OCI-LY7 (cell line): ENCODE measurements at regions of chr11 and their contacts with region 1.

Region 1: GRCh38 chr11:49995565-49995964 is 13.2 kb upstream of the OR4C12 start:
- DNase-seq: peak; percentile 80
- H3K4me3 ChIP-seq: no peak overlapping the region
- H3K27ac ChIP-seq: no peak overlapping the region
- H3K4me1 ChIP-seq: no peaks in the 10 kb centered on the region
- CTCF ChIP-seq: peak; percentile 88

Region 2: GRCh38 chr11:48307760-48308386 is 1687.7 kb before region 1 on chr11:
- CTCF ChIA-PET with region 1: no interaction called
- POLR2A ChIA-PET with region 1: no interaction called
- intact Hi-C with region 1: loop called (anchors 1 kb)
- DNase-seq: peak; percentile 70
- H3K4me3 ChIP-seq: no peak overlapping the region
- H3K27ac ChIP-seq: no peak overlapping the region
- H3K4me1 ChIP-seq: no peaks in the 10 kb centered on the region
- CTCF ChIP-seq: peak; percentile 99

Region 3: GRCh38 chr11:49221112-49221511 is 774.5 kb before region 1 on chr11:
- CTCF ChIA-PET with region 1: no interaction called
- POLR2A ChIA-PET with region 1: no interaction called
- intact Hi-C with region 1: loop called (anchors 10 kb)
- DNase-seq: no peak
- H3K4me3 ChIP-seq: no peak overlapping the region
- H3K27ac ChIP-seq: no peak overlapping the region
- H3K4me1 ChIP-seq: no peaks in the 10 kb centered on the region
- CTCF ChIP-seq: no peak

Region 4: DNA sequence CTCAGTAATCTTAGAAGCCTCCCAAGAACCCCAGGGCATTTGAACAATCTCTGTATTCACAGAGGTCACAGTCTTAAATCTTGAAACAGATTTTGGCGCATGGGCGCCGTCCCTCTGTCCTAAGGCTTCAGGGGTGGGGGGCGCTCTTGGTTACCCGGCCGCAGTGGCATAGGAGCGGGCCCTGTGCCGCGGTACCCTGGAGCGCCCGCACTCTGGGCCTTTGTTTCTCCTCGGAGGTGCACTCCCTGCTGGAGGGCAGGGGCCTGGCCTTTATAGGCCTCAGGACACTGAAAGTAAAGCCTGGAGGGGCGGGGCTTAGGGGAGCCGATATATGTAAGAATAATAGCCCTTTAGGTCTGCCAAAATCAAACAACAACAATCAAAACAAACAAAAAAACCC is 589.8 kb before region 1 on chr11:
- CTCF ChIA-PET with region 1: no interaction called
- POLR2A ChIA-PET with region 1: no interaction called
- intact Hi-C with region 1: no loop called
- DNase-seq: no peak
- H3K4me3 ChIP-seq: no peak overlapping the region
- H3K27ac ChIP-seq: no peak overlapping the region
- H3K4me1 ChIP-seq: no peaks in the 10 kb centered on the region
- CTCF ChIP-seq: no peak

Region 5: DNA sequence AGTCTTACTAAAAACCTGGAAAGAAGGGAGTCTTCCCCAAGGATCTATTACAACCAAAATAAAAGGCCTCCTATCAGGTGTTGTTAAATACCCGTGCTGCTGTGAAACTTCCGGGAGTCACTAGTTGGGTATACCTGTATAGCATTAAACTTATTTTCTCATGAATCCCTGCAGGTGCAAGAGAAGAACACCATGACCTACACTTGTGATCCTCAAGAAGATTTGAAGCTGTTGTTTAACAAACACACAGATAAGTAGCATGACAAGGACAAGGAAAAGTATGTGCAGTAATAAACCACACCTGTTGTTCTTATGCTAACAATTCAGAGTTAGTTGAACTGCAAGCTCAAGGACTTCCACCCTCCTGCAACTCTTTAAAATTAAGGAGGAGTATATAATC is 49.1 kb after region 1 on chr11:
- CTCF ChIA-PET with region 1: interaction called, 10 read pairs
- POLR2A ChIA-PET with region 1: no interaction called
- intact Hi-C with region 1: no loop called
- DNase-seq: no peak
- H3K4me3 ChIP-seq: no peak overlapping the region
- H3K27ac ChIP-seq: no peak overlapping the region
- H3K4me1 ChIP-seq: no peaks in the 10 kb centered on the region
- CTCF ChIP-seq: no peak

Region 6: GRCh38 chr11:50220651-50221050 is 225.1 kb after region 1 on chr11:
- CTCF ChIA-PET with region 1: no interaction called
- POLR2A ChIA-PET with region 1: no interaction called
- intact Hi-C with region 1: no loop called
- DNase-seq: no peak
- H3K4me3 ChIP-seq: no peak overlapping the region
- H3K27ac ChIP-seq: no peak overlapping the region
- H3K4me1 ChIP-seq: no peaks in the 10 kb centered on the region
- CTCF ChIP-seq: no peak